Left colon (tissue), 2 donors: ENCODE measurements at regions of chr15 and their contacts with region 1.

Region 1: GRCh38 chr15:65049418-65049840 is 4.2 kb downstream of the SLC51B start:
- DNase-seq: peak; percentile 91 to 92
- ATAC-seq: peak; percentile 65

Region 2: GRCh38 chr15:64731012-64731806 is 318.2 kb before region 1 on chr15:
- intact Hi-C with region 1: no loop called
- DNase-seq: peak; percentile 74 to 94
- ATAC-seq: peak; percentile 92

Region 3: DNA sequence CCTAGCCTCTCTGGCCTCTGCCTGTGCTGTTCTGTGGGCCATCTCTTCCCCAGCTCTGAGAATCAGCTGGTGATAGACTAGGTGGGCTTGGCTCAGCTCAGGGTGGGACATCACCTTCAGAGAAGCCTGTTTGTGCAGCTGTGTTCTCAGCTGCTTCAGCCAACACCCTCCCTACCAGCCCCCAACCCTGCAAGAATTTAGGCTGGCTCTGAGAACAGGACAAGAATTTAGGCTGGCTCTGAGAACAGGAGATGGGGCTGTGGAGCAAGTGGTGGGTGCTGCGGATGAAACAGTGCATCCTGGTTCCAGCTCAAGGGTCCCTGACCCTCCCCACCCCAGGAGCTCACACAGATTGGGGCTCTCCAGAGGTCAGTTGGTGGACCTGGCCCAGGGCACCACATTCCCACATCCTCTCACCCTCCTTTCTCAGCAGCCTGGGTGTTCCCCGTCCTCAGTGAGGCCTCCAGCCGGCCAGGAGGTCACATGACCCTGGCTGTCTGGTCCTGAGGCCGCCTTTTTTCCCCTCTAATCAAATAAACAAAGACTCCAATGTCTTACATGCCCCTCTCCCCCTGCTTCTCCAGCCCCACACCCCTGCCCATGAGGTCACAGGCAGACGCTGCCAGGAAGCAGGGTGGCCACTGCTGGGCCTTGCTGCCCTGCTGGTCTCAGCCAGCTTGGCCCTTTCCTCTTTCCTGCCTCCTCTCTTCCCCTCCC is 192.8 kb before region 1 on chr15:
- intact Hi-C with region 1: no loop called
- DNase-seq: peak in 1 of 2 donors; percentile 52
- ATAC-seq: no peak

Region 4: DNA sequence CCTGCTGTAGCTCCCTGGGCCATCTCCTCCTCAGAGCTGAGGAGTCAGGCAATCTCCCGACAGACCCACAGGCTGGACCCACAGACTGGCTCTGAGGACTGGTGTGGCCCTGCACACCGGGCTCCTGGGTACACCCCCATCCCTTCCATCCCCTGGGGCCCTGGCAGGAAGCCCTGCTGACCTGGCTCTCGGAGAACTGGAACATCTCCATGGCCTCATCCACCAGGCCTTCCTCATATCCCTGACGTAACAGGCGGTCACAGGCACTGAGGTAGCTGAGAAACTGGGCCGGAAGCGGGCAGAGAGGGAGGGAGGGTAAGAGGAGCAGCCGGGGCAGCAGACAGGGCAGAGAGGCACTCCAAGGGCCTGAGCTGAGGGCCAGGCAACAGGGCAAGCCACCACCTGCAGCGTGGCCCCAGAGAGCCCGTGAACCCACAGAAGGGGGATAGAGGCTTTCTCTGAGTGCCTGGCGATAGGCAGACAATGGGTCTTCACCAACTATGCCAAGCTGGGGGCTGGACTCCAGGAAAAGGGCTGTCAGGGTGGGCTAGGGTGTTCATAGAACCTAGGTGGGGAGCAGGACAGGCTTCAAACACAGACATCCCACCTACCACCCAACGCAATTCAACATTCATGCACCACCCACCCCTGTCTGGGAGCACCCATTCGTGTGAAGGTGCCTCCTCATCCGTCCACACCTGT is 45.0 kb after region 1 on chr15:
- intact Hi-C with region 1: loop called in 1 of 2 experiments (anchors 10 kb)
- DNase-seq: peak in 1 of 2 donors; percentile 71
- ATAC-seq: no peak

Region 5: DNA sequence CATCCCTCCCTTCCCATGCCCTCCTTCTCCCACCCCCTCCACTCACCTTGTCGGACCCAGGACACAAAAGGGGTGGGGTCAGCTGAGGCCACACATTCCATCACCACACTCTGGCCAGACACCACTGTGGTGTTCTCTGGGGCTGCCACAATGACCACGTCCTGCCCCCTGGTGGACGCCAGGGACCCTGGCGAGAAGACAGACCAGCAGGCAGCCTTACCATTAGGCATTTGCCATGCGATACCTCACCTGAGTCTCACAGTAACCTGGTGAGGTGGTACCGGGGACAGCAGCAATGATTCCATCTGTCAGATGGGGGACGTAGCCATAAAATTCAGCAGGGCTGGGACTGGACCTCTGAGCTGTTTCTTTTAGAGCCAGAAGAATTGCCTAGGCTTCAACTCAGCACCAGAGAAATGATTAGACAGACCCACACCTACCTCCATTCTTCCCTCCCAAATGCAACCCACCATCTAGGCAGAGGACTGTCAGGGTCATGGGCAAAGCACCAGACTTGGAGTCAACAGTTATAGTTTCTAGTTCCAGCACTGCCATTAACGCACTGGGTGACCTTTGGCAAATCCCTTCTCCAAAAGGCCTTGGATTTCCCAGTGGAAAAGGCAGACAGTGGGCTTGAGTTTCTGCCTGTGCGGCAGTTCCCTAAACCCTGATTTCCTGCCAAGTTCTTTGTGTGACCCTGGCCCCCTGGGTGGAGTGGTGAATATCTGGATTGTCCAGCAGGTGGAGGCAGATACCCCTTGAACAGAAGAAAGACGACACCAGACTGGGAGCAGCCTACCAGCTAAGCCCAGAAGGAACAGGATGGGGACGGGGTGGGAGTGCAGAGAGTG is 351.6 kb after region 1 on chr15:
- intact Hi-C with region 1: no loop called
- DNase-seq: peak; percentile 37 to 67
- ATAC-seq: peak; percentile 95